ENCODE measurements at regions of chr1 and their contacts with region 1.

Region 1: DNA sequence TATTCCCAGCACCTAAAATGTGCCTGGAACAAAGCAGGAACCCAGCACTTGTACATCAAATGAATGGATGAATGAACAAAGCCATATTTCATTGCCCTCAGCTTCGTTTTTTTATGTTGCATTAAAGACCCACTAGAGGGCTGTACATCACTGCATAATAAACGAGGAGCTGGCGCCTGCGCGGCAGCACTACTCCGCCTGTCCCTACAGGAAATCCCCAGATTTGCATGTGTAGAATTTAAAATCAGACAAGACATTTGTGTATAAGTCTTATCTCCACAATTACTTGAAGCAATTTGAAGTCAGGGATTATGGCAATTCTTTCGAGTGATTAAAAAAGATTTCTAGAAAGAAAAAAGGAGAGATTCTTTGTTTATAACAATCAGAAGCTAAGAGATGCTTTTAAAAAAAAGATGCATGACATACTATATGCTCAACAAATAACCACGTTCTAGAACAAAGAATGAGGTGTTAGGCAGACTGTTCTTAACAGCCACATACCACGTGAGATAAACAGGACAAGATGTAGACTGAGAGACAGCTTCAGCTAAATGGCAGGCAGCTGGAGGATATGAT is 5.4 kb upstream of the NEK2 start:
- DNase-seq: peak; percentile 79
- H3K4me3 ChIP-seq: no peak overlapping the region
- H3K27ac ChIP-seq: no peak overlapping the region
- H3K27me3 ChIP-seq: peaks cover 6% of the 10 kb centered on the region
- CTCF ChIP-seq: peak; percentile 78

Region 2: DNA sequence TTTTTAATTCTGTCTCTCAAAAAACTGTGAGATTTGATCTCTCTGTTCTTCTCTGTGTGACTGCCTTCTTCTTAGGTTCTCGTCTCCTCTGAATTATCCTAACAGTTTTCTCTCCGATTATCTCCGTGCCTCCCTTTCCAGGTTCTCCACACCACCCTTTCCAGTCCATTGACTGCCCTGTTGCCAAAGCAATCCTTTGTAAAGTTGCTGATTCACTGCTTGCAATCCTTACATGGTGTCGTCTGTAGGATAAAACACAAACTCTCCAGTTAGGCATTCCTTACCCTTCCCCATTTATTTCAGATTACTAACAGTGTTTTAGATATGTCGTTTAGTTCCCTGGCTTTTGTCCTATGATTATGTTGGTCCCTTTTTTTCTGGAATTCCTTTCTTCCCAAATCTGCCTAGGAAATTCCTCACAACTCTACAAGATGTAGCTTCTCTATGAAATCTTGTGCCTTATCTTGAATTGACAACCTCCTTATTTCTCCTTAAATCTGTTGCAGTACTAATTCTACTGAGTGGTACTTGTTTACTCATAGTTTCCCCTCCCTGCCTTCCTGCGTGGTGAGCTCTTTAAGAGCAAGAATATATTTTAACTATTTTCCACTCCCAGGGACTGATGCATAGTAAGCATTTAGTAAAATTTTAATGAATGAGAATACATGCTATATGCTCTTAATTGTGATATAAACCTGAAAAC is 399.4 kb before region 1 on chr1:
- CTCF ChIA-PET with region 1: no interaction called
- POLR2A ChIA-PET with region 1: no interaction called
- DNase-seq: no peak
- H3K4me3 ChIP-seq: no peak overlapping the region
- H3K27ac ChIP-seq: no peak overlapping the region
- H3K27me3 ChIP-seq: no peaks in the 10 kb centered on the region
- CTCF ChIP-seq: no peak

Region 3: GRCh38 chr1:211529453-211529852 is 151.4 kb before region 1 on chr1:
- CTCF ChIA-PET with region 1: no interaction called
- POLR2A ChIA-PET with region 1: no interaction called
- DNase-seq: no peak
- H3K4me3 ChIP-seq: no peak overlapping the region
- H3K27ac ChIP-seq: no peak overlapping the region
- H3K27me3 ChIP-seq: no peaks in the 10 kb centered on the region
- CTCF ChIP-seq: no peak

Region 4: DNA sequence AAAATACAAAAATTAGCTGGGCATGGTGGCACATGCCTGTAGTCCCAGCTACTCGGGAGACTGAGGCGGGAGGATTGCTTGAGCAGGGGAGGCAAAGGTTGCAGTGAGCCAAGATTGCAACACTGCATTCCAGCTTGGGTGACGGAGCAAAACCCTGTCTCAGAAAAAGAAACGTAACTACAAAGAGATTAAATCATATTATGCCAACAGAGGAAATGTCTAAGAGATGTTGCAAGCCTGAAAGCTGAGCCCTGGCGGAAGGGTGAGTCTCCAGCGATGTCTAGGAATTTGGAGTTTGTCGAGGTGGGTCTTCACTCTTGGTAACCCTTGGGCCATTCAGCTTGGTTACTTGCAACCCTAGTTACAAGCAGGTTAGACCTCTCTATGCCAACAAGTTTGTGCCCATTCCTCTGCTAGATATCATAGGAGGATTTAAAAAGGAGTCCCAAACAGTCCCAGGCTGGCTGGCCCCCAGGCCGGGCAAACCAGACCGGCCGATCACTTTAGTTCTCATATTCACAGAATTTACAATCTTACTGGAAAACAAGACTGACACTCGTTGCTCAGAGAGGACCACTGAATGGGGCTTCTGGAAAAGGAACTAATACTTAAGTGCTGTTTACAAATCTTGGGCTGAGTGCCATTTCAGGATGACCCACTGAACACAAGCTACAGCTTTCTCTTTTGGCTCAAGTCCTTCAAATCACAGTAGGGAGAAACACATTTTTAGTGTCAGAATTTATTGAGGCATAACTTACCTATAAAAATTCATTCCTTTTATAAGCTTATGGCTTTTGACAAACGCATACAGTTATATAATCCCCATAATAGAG is 129.0 kb before region 1 on chr1:
- CTCF ChIA-PET with region 1: no interaction called
- POLR2A ChIA-PET with region 1: no interaction called
- DNase-seq: peak; percentile 20
- H3K4me3 ChIP-seq: peak overlapping the region; percentile 8; the same call in 1 of the 2 replicates
- H3K27ac ChIP-seq: peak overlapping the region; percentile 60
- H3K27me3 ChIP-seq: no peaks in the 10 kb centered on the region
- CTCF ChIP-seq: no peak

Region 5: GRCh38 chr1:211711315-211711705 is 30.5 kb after region 1 on chr1:
- CTCF ChIA-PET with region 1: no interaction called
- POLR2A ChIA-PET with region 1: no interaction called
- DNase-seq: no peak
- H3K4me3 ChIP-seq: no peak overlapping the region
- H3K27ac ChIP-seq: no peak overlapping the region
- H3K27me3 ChIP-seq: peaks cover 2% of the 10 kb centered on the region
- CTCF ChIP-seq: no peak

Region 6: GRCh38 chr1:211944733-211945500 is 264.1 kb after region 1 on chr1:
- CTCF ChIA-PET with region 1: interaction called, 19 read pairs
- POLR2A ChIA-PET with region 1: no interaction called
- DNase-seq: no peak
- H3K4me3 ChIP-seq: no peak overlapping the region
- H3K27ac ChIP-seq: no peak overlapping the region
- H3K27me3 ChIP-seq: no peaks in the 10 kb centered on the region
- CTCF ChIP-seq: peak; percentile 33

Region 7: GRCh38 chr1:212012034-212012740 is 331.3 kb after region 1 on chr1:
- CTCF ChIA-PET with region 1: interaction called, 12 read pairs
- POLR2A ChIA-PET with region 1: no interaction called
- DNase-seq: no peak
- H3K4me3 ChIP-seq: no peak overlapping the region
- H3K27ac ChIP-seq: no peak overlapping the region
- H3K27me3 ChIP-seq: no peaks in the 10 kb centered on the region
- CTCF ChIP-seq: peak; percentile 99

Region 8: GRCh38 chr1:212368073-212368484 is 687.2 kb after region 1 on chr1:
- CTCF ChIA-PET with region 1: interaction called, 11 read pairs
- POLR2A ChIA-PET with region 1: no interaction called
- DNase-seq: peak; percentile 47
- H3K4me3 ChIP-seq: no peak overlapping the region
- H3K27ac ChIP-seq: no peak overlapping the region
- H3K27me3 ChIP-seq: no peaks in the 10 kb centered on the region
- CTCF ChIP-seq: peak; percentile 95

Measured in AG04450 (cell line).